Activated naive CD4-positive, alpha-beta T cell treated with anti-CD3 and anti-CD28 coated beads, Interleukin-2, amount 10 ng/mL, durations not matched to agents 7 days and 5 days (primary cell): ENCODE measurements at regions of chr7 and their contacts with region 1.

Region 1: GRCh38 chr7:1065263-1066260 is 21.2 kb downstream of the GPR146 start:
- DNase-seq: peak; percentile 91
- H3K4me3 Mint-ChIP-seq: peak overlapping the region; percentile 28
- H3K27ac Mint-ChIP-seq: no peak overlapping the region
- H3K4me1 Mint-ChIP-seq: peaks cover 7% of the 10 kb centered on the region
- H3K27me3 Mint-ChIP-seq: peaks cover 26% of the 10 kb centered on the region

Region 2: DNA sequence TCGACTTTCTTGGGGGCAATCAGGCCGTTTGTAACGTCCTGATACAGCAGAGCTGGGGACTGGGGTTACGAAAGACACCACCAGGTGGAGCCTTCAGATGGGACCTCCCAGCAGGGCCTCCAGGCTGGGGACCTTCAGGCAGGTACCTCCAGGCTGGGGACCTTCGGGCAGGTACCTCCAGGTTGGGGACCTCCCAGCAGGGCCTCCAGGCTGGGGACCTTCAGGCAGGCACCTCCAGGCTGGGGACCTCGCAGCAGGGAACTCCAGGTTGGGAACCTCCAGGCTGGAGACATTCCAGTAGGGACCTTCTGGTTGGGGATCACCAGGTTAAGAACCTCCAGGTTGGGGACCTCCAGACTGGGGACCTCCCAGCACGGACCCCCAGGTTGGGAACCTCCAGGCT is 44.7 kb before region 1 on chr7:
- CTCF ChIA-PET with region 1: interaction called, 16 read pairs
- DNase-seq: peak; percentile 45
- H3K4me3 Mint-ChIP-seq: no peak overlapping the region
- H3K27ac Mint-ChIP-seq: no peak overlapping the region
- H3K4me1 Mint-ChIP-seq: peaks cover 9% of the 10 kb centered on the region
- H3K27me3 Mint-ChIP-seq: no peaks in the 10 kb centered on the region

Region 3: DNA sequence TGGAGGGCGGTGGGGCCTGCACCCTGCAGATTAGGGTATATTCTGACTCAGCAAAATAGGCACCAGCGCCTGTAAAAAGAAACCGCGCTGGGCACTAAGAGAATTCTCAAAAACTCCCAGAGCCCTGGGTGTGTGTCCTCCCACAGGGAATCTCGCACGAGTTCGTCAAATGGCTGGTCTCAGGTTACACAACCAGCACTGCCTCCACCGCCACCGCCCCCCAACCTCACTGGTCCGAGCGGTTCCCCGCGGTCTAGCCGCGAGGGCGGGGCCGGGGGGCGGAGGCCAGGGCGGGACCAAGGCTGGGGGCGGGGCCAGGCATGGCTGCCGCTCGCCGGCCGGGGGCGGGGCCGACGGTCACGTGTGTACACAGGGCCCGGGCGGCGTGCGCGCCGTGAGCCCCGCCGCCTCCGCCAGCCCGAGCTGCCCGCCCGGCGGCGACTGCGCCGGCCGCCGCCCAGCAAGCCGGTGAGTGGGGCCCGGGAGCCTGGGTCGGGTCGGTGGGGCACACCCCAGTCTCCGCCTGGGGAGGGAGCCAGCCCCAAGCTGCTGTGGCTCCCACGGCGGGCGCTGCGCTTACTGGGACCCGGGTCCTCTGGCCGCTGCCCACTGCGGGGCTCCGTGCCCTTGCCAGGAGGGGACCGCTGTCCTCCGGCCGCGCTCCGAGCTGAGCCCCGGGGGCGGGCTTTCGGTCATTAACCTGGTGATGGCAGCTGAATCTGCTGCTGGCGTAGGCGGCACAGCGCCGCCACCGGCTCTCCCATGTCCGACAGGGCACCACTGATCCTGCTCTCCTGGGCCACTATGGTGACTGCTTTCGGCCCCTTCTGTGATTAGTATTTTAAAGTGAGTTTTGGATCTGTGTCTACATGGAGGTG is 21.1 kb before region 1 on chr7 and contains the start of gene GPR146:
- CTCF ChIA-PET with region 1: interaction called, 19 read pairs
- DNase-seq: peak; percentile 93
- H3K4me3 Mint-ChIP-seq: peak within 1 kb of the TSS; percentile 84
- H3K27ac Mint-ChIP-seq: peak within 1 kb of the TSS; percentile 86
- H3K4me1 Mint-ChIP-seq: peaks cover 69% of the 10 kb centered on the region
- H3K27me3 Mint-ChIP-seq: no peaks in the 10 kb centered on the region

Region 4: DNA sequence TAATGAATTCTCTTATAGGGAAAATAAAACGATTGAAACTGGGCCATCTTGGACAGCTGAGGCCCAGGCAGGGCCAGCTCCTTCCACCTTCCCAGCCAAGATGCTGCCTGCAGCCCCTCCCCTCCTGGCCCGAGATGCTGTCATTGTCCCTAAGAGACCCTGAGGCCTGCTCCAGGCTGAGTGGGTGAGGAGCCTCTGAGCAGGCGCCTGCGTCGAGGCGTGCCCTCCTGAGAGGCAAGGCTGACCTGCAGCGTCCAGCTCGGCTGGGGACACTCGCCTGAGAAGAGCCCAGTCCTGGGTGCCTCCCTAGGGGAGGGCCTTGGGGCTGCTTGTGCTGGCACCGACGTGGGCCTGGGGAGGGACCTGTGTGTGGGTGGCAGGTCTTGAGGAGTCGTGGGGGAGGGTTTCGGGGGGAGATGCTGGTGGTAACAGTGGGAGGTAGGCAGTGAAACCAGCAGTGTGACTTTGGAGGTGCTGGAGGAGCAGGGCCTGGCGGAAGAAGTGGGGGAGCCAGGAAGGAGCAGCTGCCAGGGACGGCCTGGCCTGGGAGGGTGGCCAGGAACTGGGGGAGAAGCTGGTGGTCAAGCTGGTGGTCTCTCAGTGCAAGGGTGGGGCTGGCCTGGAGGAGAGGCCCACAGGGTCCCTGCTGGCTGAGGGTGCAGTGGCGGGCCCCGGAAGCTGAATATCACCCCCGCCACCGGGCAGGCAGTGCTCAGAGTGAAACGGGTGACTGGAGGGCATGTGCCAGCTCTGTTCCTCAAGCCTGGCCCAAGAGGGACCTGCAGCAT is 13.3 kb before region 1 on chr7:
- CTCF ChIA-PET with region 1: interaction called, 10 read pairs
- DNase-seq: no peak
- H3K4me3 Mint-ChIP-seq: no peak overlapping the region
- H3K27ac Mint-ChIP-seq: no peak overlapping the region
- H3K4me1 Mint-ChIP-seq: peaks cover 58% of the 10 kb centered on the region
- H3K27me3 Mint-ChIP-seq: no peaks in the 10 kb centered on the region